Astrocyte of the cerebellum (primary cell): ENCODE measurements at regions of chr6 and their contacts with region 1.

Region 1: GRCh38 chr6:5522147-5522546 is 260.8 kb downstream of the FARS2 start:
- DNase-seq: no peak
- H3K4me3 ChIP-seq: no peak overlapping the region
- CTCF ChIP-seq: no peak

Region 2: DNA sequence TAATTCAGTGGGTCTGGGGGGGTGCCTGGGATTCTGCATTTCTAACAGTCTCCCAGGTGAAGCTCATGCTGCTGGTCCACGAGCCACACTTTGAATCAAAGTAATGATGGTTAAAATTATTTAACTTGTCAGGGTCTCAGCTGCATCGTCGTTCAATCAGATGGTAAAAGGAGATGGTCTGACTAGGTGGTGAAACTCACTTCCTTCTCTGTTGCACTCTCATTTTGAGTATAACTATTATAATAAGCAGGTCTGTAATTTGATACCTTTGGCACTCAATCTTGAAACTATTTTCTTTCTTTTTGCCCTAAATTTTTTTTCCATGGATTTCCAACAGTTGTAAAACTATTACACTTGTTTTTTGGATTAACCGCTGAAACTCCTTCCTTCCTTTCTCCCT is 31.6 kb after region 1 on chr6:
- in situ Hi-C with region 1: no loop called
- DNase-seq: no peak
- H3K4me3 ChIP-seq: no peak overlapping the region
- CTCF ChIP-seq: no peak

Region 3: GRCh38 chr6:5606546-5606945 is 84.4 kb after region 1 on chr6:
- in situ Hi-C with region 1: loop called (anchors 5 kb)
- DNase-seq: no peak
- H3K4me3 ChIP-seq: no peak overlapping the region
- CTCF ChIP-seq: no peak